Activated CD4-positive, alpha-beta T cell treated with anti-CD3 and anti-CD28 coated beads, Interleukin-2, amount 10 ng/mL, durations not matched to agents 7 days and 5 days (primary cell): ENCODE measurements at regions of chr1 and their contacts with region 1.

Region 1: DNA sequence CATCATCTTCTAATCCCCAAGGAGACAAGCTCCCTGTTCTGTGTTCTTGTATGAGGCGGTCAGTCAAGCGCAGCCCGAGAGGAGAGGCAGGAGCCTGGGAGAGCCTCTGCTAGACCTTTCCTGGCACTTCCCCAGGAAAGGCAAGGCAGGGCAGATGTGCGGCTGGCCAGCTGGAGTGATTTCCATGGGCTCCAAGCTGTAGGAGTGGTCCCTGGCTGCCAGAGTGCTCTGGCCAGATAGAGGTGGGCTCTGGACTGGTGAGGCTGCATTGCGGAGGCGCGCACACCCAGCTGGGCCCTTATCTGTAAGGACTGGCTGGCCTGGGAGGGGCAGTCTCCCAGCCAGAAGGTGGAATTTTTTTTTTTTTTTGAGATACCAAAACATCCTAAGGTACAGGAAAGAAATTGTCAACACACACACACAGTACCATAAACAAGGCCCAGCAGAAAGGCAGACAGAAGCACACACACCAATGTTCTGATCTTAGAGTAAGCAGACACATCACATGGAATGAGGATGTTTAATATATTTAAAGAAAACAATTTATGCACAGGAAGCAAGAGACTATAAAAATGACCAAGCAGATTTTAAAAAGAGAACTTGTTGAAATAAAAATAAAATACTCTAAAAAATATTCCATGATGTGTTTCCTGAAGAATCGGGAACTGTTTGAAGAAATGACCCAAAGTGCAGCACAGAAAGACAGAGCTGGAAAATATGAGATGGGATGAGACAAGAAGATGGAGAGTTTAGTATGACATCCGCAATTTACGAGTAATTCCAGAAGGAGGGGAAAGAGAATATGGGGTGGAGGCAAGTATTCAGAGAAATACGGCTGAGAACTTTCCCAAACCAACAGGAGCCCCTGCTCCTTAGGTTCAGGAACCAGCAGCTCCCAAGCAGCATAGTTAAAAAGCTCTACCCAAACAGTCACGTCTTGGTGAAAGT is 13.4 kb downstream of the IBA57 start:
- DNase-seq: no peak
- H3K4me3 Mint-ChIP-seq: no peak overlapping the region
- H3K27ac Mint-ChIP-seq: no peak overlapping the region
- H3K4me1 Mint-ChIP-seq: peaks cover 2% of the 10 kb centered on the region
- H3K27me3 Mint-ChIP-seq: no peaks in the 10 kb centered on the region

Region 2: DNA sequence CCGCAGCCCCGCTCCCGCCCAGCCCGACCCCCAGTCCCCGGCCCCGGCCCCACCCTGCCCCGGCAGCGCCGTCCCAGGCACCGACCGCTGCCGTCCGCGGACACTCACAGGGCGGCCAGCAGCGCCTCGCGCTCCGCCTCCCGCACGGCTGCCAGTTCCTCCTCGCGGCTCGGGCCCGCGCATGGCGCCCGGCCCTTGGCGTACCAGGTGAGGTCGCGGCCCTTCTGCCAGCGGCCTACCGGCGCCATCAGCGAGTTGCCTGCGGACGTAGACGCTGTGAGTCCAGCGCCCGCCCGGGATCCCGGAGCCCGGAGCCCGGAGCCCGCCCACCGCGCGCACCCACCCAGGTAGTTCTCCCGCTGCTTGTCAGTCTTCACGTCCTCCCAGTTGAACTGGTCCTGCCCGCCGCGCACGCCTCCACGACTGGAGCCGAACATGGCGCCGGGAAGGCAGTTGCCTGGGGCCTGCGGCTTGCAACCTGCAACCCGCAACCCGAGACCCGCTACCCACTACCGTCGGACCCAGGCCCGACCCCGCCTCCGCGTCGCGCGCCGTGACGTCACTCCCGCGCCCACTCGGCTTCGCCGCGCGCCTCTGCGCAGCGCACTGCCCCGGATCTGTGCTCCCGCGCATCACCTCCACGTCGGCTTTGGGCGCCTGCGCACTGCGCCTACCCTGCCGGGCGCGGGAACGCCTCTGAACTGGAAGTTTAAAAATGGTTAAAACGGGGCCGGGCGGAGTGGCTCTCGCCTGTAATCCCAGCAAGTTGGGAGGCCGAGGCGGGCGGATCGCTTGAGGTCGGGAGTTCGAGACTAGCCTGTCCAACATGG is 76.0 kb before region 1 on chr1 and contains the start of gene C1orf35:
- CTCF ChIA-PET with region 1: no interaction called
- POLR2A ChIA-PET with region 1: no interaction called
- DNase-seq: peak; percentile 97
- H3K4me3 Mint-ChIP-seq: peak within 1 kb of the TSS; percentile 93
- H3K27ac Mint-ChIP-seq: peak within 1 kb of the TSS; percentile 97
- H3K4me1 Mint-ChIP-seq: peaks cover 33% of the 10 kb centered on the region
- H3K27me3 Mint-ChIP-seq: no peaks in the 10 kb centered on the region
- total RNA-seq, gene C1orf35: 14.4 to 24.4 TPM

Region 3: GRCh38 chr1:228314658-228315483 is 135.9 kb after region 1 on chr1:
- CTCF ChIA-PET with region 1: no interaction called
- POLR2A ChIA-PET with region 1: interaction called, 10 read pairs
- DNase-seq: no peak
- H3K4me3 Mint-ChIP-seq: no peak overlapping the region
- H3K27ac Mint-ChIP-seq: no peak overlapping the region
- H3K4me1 Mint-ChIP-seq: no peaks in the 10 kb centered on the region
- H3K27me3 Mint-ChIP-seq: no peaks in the 10 kb centered on the region